ENCODE measurements at regions of chr2 and their contacts with region 1.

Region 1: DNA sequence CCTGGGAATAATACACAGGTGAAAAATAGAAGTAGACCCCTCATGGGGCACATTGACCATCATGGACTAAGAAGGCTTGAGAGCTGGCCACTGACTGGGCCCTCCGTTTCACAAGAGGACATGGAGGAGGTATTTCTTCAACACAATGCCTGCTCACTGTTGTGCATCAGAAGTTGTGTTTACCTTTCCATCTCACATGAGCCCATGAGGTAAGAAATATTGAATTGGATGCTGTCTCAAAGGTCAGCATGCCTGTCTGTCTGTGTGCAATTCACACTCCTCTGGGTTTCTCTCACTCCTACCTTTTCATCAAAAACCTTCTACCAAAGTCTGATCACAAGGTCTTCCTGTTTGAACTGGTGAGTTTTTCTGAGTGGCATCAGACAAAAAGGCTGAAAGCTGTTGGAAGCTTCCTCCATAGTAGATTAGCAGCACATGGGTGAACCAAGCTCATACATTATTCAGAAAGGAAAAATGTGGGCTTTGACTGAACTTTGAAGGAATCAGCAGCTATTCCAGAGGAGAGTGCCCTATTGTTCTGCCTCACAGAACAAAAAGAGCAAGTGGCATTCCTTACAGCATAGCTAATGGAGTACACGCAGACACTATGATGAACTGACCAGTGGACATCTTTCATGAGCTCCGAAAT is 143.2 kb upstream of the RND3 start:
- DNase-seq: no peak
- H3K4me3 ChIP-seq: no peak overlapping the region
- H3K27me3 ChIP-seq: no peaks in the 10 kb centered on the region
- CTCF ChIP-seq: no peak

Region 2: DNA sequence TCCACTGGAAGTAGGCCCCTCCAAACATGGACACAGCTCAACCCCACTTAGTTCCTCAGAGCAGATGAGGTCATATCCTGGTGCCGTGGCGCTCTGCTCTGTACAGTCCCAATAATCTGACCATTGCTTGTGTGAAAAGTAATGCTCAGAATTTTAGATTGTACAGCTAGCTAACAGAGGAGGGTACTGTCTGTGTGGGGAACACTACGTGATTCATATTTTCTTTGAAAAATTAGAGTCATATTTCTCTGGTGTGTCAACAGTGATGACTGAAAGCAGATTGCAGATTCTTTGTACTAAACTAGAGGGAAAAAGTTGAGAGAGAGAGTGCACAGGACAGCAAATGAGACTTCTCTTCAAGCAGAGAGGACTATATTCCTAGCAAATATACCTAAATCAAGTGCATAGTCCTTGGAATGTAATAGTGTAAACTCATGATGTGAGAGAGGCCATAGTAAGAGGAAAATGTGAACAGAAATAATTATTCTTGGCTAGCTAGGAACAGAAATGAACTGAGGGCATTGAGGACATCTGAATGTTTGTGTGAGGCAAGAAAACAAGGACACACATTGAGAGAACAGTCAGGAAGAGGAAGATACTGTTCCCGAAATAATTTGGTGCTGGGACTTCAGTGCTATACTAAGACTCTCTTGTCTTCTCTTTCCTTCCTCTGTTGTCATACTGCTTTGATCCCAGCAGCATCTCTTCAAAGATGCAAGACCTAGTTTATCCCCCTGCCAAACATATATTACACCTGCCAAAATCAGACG is 13.8 kb after region 1 on chr2:
- CTCF ChIA-PET with region 1: interaction called, 13 read pairs
- POLR2A ChIA-PET with region 1: no interaction called
- DNase-seq: no peak
- H3K4me3 ChIP-seq: no peak overlapping the region
- H3K27me3 ChIP-seq: no peaks in the 10 kb centered on the region
- CTCF ChIP-seq: no peak

Measured in BJ (cell line).